ENCODE measurements at regions of chr4 and their contacts with region 1.

Region 1: DNA sequence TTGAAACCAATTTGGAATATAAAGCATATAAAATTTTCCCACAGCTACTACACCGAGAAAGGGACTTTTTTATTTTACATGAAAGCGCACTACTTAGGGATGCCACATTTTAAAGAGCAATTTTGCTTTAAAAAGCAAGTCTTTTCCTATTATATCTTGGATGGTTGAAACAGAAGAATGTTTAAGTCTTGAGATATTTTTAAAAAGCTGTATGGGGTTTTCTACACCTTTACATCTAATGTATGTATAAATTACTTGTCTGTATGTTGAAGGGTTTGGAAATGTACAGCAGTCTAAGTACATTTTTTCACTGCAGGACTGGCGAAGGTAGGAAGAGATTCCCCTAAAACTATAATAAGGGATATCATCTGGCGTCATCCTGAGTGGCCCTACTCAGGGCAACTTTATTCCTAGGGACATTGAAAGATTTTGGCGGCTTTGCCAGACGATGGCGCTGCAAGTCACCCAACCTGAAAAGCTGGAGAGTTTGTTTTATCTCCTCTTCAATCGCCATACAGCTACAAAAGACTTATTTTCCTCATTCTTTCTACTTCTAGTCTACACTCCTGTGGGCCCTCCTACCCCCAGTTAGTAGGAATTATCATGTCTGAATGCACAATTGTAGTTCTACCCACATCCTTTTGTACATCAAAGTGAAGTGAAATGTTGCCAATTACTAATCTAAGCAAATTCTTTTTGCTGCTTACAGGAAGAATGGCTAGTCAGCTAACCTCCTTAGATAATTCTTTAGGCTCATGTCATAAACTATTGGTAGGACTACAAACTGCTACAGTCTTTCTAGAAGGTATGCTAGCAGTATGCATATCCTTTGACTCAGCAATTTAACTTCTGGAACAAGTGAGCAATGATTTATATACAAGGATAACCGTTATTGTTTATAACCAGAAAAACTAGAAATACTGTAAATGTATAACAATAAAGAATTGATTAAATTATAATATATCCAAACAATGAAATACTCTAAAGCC is 782 bp upstream of the NEK1 start:
- DNase-seq: peak; percentile 66 to 76 (median 74)
- H3K4me3 ChIP-seq: peak overlapping the region; percentile 37 to 68
- H3K4me3 Mint-ChIP-seq: peak overlapping the region; percentile 94 to 98 (median 96)
- H3K27ac ChIP-seq: peak overlapping the region; percentile 98
- H3K27ac Mint-ChIP-seq: peak overlapping the region; percentile 99 to 100 (median 99)
- H3K4me1 ChIP-seq: peaks cover 30% of the 10 kb centered on the region
- H3K4me1 Mint-ChIP-seq: peaks cover 23 to 45% (median 31%) of the 10 kb centered on the region in 4 donors
- H3K27me3 ChIP-seq: no peaks in the 10 kb centered on the region
- H3K27me3 Mint-ChIP-seq: no peaks in the 10 kb centered on the region

Region 2: GRCh38 chr4:169659716-169660670 is 46.8 kb after region 1 on chr4:
- CTCF ChIA-PET with region 1: interaction called, 10 read pairs
- POLR2A ChIA-PET with region 1: interaction called, 5 read pairs
- intact Hi-C with region 1: no loop called
- DNase-seq: peak; percentile 65 to 92 (median 80)
- H3K4me3 ChIP-seq: no peak overlapping the region
- H3K4me3 Mint-ChIP-seq: peak overlapping the region in 7 of 8 donors; percentile 37 to 87 (median 76)
- H3K27ac ChIP-seq: peak overlapping the region; percentile 22
- H3K27ac Mint-ChIP-seq: peak overlapping the region; percentile 85 to 99 (median 96)
- H3K4me1 ChIP-seq: peaks cover 24% of the 10 kb centered on the region
- H3K4me1 Mint-ChIP-seq: peaks cover 17 to 34% (median 26%) of the 10 kb centered on the region in 4 donors
- H3K27me3 ChIP-seq: no peaks in the 10 kb centered on the region
- H3K27me3 Mint-ChIP-seq: no peaks in the 10 kb centered on the region

Region 3: DNA sequence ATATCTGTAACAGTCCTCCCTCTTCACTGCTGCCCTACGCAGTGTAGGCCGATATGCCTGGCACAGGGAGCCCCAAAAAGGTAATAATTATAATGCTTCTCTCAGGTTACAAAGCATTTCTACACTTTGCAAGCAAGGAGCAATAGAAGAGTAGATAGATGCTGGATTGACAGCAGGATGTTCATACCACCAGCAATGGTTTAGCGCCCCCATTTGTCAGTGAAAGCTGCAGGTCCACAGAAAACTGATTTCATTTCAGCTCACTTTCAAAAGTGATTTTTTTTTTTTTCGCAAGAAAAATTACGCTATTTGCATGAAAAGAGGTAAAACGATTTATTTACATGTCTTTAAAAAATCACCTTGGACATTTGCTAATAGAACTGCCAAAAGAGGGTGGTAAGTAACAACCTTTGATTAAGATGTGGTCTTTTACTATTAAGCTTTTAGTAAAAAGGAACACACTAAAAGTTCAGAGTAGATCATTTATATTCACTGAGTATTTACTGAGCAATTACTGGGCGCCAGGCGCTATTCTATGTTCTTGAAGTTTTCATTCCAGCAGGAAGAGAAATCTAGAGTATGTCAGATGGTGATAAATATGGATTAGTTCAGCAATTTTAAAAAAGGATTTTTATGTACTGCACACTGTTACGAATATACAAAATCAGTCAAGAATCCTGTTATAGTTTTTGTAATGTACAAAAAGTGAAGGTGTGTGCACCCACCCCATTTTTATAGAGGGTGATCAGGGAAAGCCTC is 110.2 kb after region 1 on chr4:
- CTCF ChIA-PET with region 1: interaction called, 8 read pairs
- POLR2A ChIA-PET with region 1: no interaction called
- intact Hi-C with region 1: loop called (anchors 2 kb)
- DNase-seq: no peak
- H3K4me3 ChIP-seq: no peak overlapping the region
- H3K4me3 Mint-ChIP-seq: no peak overlapping the region
- H3K27ac ChIP-seq: no peak overlapping the region
- H3K27ac Mint-ChIP-seq: peak overlapping the region in 2 of 7 donors; percentile 17 to 30
- H3K4me1 ChIP-seq: no peaks in the 10 kb centered on the region
- H3K4me1 Mint-ChIP-seq: peaks cover 4 to 14% (median 6%) of the 10 kb centered on the region in 4 donors
- H3K27me3 ChIP-seq: no peaks in the 10 kb centered on the region
- H3K27me3 Mint-ChIP-seq: no peaks in the 10 kb centered on the region

Region 4: GRCh38 chr4:169774466-169775445 is 161.6 kb after region 1 on chr4:
- CTCF ChIA-PET with region 1: interaction called, 10 read pairs
- POLR2A ChIA-PET with region 1: interaction called, 3 read pairs
- intact Hi-C with region 1: no loop called
- DNase-seq: peak in 2 of 5 donors; percentile 9 to 11
- H3K4me3 ChIP-seq: no peak overlapping the region
- H3K4me3 Mint-ChIP-seq: peak overlapping the region in 7 of 8 donors; percentile 28 to 78 (median 52)
- H3K27ac ChIP-seq: no peak overlapping the region
- H3K27ac Mint-ChIP-seq: no peak overlapping the region
- H3K4me1 ChIP-seq: no peaks in the 10 kb centered on the region
- H3K4me1 Mint-ChIP-seq: peaks cover 1 to 17% (median 6%) of the 10 kb centered on the region in 4 donors
- H3K27me3 ChIP-seq: peaks cover 5% of the 10 kb centered on the region
- H3K27me3 Mint-ChIP-seq: peaks cover 20 to 37% of the 10 kb centered on the region in 2 donors

Region 5: GRCh38 chr4:170027181-170027829 is 414.1 kb after region 1 on chr4:
- CTCF ChIA-PET with region 1: interaction called, 19 read pairs
- POLR2A ChIA-PET with region 1: interaction called, 13 read pairs
- intact Hi-C with region 1: loop called (anchors 1 kb)
- DNase-seq: peak; percentile 88 to 93 (median 92)
- H3K4me3 ChIP-seq: peak overlapping the region; percentile 70 to 93
- H3K4me3 Mint-ChIP-seq: peak overlapping the region; percentile 85 to 94 (median 92)
- H3K27ac ChIP-seq: peak overlapping the region; percentile 18
- H3K27ac Mint-ChIP-seq: peak overlapping the region; percentile 82 to 95 (median 88)
- H3K4me1 ChIP-seq: peaks cover 12% of the 10 kb centered on the region
- H3K4me1 Mint-ChIP-seq: peaks cover 5 to 15% (median 8%) of the 10 kb centered on the region in 4 donors
- H3K27me3 ChIP-seq: no peaks in the 10 kb centered on the region
- H3K27me3 Mint-ChIP-seq: peaks cover 2 to 7% of the 10 kb centered on the region in 2 donors

Region 6: DNA sequence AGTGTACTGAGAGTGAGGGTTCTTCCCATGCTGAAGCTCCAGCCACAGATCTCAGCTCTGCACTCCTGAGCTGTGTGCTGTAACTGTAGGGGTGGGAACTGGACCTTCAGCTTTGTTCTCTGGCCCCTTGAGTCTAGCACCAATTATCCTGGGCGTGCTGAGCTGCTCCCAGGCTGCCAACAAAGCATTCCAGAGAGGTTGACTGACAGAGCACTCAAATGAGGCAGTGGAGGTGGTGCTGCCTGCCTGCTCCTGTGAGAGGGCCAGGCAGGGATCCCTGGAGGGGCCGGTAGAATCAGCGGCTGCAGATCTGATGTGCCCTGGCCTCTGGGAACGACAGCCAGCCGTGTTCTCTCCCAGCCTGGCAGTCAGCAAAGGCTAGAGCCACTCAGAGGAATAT is 852.3 kb after region 1 on chr4:
- CTCF ChIA-PET with region 1: no interaction called
- POLR2A ChIA-PET with region 1: no interaction called
- intact Hi-C with region 1: no loop called
- DNase-seq: no peak
- H3K4me3 ChIP-seq: no peak overlapping the region
- H3K4me3 Mint-ChIP-seq: no peak overlapping the region
- H3K27ac ChIP-seq: no peak overlapping the region
- H3K27ac Mint-ChIP-seq: no peak overlapping the region
- H3K4me1 ChIP-seq: no peaks in the 10 kb centered on the region
- H3K4me1 Mint-ChIP-seq: no peaks in the 10 kb centered on the region
- H3K27me3 ChIP-seq: no peaks in the 10 kb centered on the region
- H3K27me3 Mint-ChIP-seq: no peaks in the 10 kb centered on the region

Measured in CD4-positive, alpha-beta memory T cell (primary cell).